Posterior vena cava (tissue), 2 donors: ENCODE measurements at regions of chr6 and their contacts with region 1.

Region 1: DNA sequence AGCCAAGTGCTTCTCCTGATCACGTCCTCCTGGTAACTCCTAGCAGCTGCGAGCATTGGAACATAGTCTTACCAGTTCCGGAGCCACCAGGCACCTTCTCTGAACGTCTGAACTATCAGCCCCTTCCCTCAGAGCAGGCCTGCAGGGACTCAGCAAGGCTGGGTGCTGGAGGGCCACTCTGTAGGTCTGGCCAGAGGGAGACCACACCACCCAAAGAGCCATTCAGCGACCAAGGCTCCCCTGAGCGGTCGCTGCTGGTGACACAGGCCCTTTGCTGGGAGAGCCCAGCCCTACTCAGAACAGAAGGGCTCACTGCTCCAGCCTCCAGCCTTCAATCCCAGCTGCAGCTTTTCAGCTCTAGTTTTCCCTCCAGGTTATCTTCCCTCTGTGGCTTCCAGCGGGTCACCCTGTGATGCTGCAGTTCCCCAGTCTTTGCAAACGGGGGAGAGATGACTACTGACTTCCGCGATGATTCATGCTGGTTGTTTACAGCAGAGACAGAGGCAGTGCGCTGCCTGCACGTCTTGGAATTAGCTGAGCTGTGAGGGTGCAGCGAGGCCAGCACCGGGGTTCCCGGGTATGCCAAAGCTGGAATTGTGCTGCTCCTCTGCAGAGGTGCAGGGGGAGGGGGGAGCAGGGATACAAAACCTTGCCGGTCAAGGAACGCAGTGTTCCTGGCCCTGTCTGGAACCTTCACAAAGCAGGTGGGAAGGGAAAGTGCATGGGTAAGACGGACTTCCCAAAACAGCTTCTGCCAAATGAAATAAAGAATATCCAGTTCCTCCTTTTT is 161.4 kb downstream of the LY86 start:
- DNase-seq: peak; percentile 83

Region 2: DNA sequence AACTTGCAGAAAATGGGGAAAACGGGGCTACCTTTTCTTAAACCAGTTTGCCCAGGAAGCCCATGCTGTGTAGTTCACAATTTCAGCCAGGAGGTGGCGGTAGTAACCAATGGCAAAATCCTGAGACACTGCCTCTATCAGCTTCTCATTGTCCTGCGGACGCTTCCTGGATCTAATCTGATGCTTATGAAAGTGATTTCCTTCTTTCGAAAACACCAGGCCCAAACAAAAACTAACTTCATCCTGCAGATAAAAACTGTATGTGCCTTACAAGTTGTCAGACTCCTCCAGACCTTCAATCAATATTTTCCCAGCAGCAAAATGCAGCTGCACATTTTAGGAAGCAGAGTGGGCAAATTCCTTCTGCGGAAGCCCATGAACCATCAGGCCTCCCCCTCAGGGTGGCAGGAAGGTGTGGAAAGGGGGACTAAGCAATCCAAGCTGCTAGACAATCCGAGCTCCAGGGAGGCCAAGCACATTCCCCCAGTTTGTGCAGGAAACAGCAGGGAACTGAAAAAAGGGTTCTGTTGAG is 72.9 kb before region 1 on chr6:
- intact Hi-C with region 1: loop called in 1 of 2 experiments (anchors 5 kb)
- DNase-seq: peak; percentile 85